GM23248 (cell line): ENCODE measurements at regions of chr17 and their contacts with region 1.

Region 1: DNA sequence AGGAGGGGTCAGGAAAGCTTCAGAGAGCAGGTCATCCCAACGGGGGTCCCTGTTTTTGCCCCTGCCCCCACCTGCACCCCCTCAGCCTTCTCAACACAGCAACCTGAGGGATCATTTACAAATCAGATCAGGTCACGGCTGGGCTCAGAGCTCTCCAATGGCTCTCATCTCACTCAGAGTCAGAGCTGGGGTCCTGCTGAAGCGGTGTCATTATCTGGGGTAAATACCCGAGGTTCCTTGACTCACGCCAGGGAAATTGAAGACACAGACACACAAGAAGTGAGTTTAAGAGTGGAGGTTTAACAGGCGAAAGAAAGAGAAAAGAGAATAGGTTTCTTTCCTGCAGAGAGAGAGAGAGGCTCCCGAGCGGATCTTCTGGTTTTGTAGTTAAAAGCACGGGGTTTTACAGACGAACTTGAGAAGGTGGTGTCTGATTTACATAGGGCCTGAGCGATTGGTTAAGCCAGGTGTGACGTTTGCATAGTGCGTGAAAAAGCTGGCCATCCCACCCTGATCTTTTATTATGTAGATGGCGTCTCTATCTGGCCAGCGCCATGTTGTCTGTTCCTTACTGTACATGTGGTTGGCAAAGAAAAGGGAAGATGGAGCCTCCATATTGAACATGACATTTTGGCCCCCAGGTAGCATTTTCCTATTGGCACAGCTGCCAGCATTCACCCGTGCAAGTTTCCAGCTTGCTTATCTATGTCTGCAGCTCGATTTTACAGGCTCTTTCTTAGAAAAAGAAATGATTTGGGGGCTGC is 51.4 kb downstream of the WSB1 start:
- DNase-seq: no peak
- H3K4me3 ChIP-seq: no peak overlapping the region
- H3K27ac ChIP-seq: no peak overlapping the region
- H3K4me1 ChIP-seq: no peaks in the 10 kb centered on the region
- H3K27me3 ChIP-seq: no peaks in the 10 kb centered on the region

Region 2: DNA sequence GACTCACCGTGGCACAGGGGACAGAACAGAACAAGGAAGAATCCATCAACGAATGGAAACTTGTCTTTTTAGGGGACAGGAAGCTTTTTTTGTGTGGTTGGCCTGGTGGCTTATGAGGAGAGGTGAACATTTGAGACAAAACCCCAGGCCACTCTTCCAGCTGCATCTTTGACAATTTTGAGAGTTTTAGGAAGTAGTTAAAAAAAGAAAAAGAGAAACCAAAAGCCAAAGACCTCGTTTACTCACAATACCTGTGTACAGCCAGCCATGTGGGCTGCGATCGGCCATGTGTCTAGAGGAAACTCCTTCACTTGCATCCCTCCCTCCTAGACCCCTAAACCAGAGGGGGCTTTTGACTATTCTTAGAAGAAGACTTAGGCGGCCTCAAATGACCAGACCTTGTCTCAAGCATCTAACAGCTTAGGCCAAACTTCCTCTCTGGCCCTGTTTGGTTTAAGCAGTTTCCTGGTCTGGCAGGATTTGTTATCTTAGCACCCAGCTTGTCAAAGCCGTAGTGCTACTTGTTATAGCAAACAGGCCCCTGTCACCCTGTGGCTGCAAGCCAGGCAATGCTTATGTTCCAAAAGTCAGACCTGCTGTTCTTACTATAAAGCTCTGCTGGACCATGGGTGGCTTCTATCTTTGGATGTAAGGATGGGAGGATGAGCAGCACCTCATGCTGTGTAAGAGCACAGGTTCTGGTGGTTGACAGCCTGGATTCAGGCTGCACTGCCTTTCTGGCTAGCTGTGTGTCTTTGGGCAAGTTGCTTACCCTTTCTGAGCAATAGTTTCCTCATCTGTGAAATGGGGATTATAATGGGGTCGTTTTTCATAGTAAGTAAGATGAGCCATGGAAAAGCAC is 128.7 kb after region 1 on chr17:
- in situ Hi-C with region 1: no loop called
- DNase-seq: no peak
- H3K4me3 ChIP-seq: no peak overlapping the region
- H3K27ac ChIP-seq: no peak overlapping the region
- H3K4me1 ChIP-seq: 0 out of 2 replicates have a peak, but pooled peaks cover 8% of the 10 kb centered on the region
- H3K27me3 ChIP-seq: no peaks in the 10 kb centered on the region; the same call in 1 of the 2 replicates

Region 3: DNA sequence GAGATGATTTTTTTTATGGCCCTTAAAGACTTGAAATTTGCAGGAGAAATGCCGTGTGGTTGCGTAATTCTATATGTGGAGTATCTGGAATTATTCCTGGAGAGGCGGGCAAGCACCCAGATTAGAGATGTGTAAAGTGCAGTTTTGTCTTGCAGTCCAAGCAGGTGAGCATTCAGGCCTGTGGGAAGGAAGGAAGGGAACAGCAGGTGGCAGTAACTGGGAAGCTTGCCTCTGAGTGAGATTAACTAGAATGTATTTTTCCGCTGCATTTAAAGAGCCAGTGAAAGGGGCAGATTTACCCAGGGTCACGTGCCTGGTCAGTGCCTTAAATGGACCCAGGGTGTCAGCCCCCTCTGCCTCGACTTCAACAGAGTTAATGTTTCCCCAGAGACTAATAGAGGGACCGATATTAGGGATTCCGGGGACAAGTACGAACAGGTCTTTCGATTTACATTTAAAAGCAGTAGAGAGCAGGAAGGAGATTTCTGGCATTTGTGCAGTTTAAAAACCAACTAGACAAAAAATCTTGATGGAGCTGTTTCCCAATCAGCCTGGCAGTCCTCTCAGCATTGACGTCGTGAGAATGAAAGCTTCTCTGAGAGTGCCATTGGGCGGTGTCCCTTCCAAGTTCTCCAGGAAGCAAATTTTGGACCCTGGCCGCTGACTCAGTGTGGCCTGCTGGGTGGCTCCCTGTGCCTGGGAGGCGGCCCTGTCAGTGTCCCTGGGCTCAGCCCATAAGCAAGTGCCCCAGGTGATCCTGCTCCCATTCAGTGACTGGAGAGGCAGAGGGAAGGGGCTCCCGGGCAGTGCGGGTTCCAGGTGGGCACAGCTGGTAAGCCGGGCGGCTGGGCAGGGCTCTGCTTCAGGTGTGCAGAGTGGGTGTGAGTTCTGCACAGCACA is 149.1 kb after region 1 on chr17:
- in situ Hi-C with region 1: loop called (anchors 10 kb)
- DNase-seq: peak; percentile 83
- H3K4me3 ChIP-seq: peak overlapping the region; percentile 61
- H3K27ac ChIP-seq: peak overlapping the region; percentile 67
- H3K4me1 ChIP-seq: peaks cover 16% of the 10 kb centered on the region
- H3K27me3 ChIP-seq: no peaks in the 10 kb centered on the region